ENCODE measurements at regions of chr17 and their contacts with region 1.

Region 1: GRCh38 chr17:75632863-75633485 is at the start of gene SMIM5:
- DNase-seq: peak; percentile 75 to 86 (median 80)
- H3K4me3 ChIP-seq: peak within 1 kb of the TSS in 3 of 7 experiments; percentile 19 to 46 (median 39)
- H3K27ac ChIP-seq: no peak within 1 kb of the TSS
- H3K4me1 ChIP-seq: peaks cover 0 to 44% (median 36%) of the 10 kb centered on the region in 4 experiments
- H3K27me3 ChIP-seq: no peaks in the 10 kb centered on the region

Region 2: GRCh38 chr17:75393523-75394331 is 239.2 kb before region 1 on chr17:
- CTCF ChIA-PET with region 1: no interaction called
- POLR2A ChIA-PET with region 1: no interaction called
- DNase-seq: peak; percentile 96 to 98 (median 98)
- H3K4me3 ChIP-seq: peak overlapping the region; percentile 39 to 87 (median 77)
- H3K27ac ChIP-seq: peak overlapping the region; percentile 55 to 80
- H3K4me1 ChIP-seq: peaks cover 17 to 40% (median 22%) of the 10 kb centered on the region in 4 experiments
- H3K27me3 ChIP-seq: no peaks in the 10 kb centered on the region

Region 3: GRCh38 chr17:75571197-75571873 is 61.6 kb before region 1 on chr17:
- CTCF ChIA-PET with region 1: no interaction called
- POLR2A ChIA-PET with region 1: no interaction called
- DNase-seq: peak; percentile 95 to 98 (median 95)
- H3K4me3 ChIP-seq: no peak overlapping the region
- H3K27ac ChIP-seq: peak overlapping the region; percentile 61 to 91
- H3K4me1 ChIP-seq: peaks cover 0 to 22% (median 20%) of the 10 kb centered on the region in 4 experiments
- H3K27me3 ChIP-seq: no peaks in the 10 kb centered on the region

Region 4: GRCh38 chr17:75619506-75620431 is 13.2 kb before region 1 on chr17:
- CTCF ChIA-PET with region 1: interaction called, 28 read pairs
- POLR2A ChIA-PET with region 1: no interaction called
- DNase-seq: peak in 2 of 3 donors; percentile 35 to 44
- H3K4me3 ChIP-seq: no peak overlapping the region
- H3K27ac ChIP-seq: no peak overlapping the region
- H3K4me1 ChIP-seq: no peaks in the 10 kb centered on the region
- H3K27me3 ChIP-seq: no peaks in the 10 kb centered on the region

Region 5: DNA sequence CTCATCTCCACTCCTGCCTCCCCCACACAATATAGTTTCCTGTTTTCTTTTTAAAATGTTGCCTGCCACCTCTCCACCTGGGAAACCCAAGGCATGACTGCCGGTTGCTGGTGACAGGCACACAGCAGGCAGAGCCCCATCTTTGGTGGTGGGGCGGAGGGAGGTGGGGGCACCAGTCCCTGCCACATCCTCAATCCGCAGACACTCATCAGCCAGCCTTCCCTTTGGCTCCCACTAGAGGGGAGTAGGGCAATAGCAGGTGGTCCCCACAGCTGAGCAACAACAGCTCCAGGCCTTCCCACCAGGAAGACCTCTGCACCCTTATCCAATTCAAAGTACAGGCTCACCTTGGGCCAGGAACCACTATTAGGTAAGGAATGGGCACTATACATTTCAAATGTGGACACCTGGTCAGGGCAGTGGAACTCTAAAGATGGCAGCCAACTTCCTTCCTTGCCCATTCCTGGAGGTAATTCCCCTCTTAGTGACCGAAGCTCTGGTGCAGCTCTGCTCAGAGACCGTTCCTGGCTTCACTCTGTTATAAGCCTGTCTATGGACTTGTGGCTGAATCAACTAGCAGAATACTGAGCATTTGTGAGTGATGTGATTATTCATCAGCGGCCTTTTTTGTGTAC is 20.1 kb after region 1 on chr17:
- CTCF ChIA-PET with region 1: interaction called, 834 read pairs
- POLR2A ChIA-PET with region 1: interaction called, 7 read pairs
- DNase-seq: peak; percentile 71 to 83 (median 83)
- H3K4me3 ChIP-seq: peak overlapping the region in 2 of 7 experiments; percentile 11 to 24
- H3K27ac ChIP-seq: peak overlapping the region in 1 of 2 experiments; percentile 43
- H3K4me1 ChIP-seq: peaks cover 0 to 15% (median 10%) of the 10 kb centered on the region in 4 experiments
- H3K27me3 ChIP-seq: no peaks in the 10 kb centered on the region

Region 6: DNA sequence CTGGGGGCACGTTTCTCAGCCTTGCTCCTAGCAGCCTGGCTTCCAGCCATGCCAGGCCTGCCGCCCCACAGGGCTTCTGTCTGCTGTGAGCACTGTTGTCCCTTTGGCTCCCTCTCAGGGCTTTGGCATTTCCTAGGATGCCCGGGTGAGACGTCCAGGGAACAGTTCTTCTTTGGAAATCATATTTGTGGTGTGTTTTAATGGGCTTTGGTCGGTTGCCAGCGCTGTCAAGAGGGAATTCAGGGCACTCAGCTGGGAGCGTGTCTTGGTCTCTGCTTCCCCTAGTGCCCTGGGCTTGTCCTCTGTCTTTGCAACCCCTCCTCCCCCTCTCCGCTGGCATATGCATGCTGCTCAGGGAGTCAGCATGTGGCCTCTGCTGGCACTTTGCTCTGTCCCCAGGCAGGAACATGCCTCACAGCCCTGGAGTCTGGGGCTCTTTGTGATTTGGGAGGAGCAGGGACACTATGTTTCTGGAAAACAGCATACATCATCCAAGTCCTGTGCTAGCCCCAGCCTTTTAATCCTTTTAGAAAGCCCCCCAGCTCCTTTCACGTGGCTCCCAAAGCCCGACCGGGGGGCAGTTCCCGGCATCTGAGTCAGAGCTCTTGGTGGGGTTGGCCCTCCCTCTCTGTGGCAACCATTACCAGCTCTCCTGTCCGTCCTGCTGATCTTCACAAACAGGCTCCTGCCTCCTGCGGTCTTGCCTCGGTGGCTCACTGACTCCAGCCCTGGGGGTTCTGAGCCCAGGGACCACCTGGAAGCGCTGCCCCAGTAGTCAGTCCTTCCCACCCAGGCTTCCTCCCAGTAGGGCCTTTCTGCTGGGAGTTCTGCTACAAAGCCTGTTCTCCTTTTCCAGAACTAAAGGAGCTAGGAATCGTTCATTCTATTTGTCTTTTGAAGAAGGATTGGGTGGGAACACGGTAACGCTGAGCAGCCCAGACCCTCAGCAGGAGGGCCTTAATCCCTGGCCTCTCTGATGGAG is 60.8 kb after region 1 on chr17:
- CTCF ChIA-PET with region 1: interaction called, 15 read pairs
- POLR2A ChIA-PET with region 1: no interaction called
- DNase-seq: no peak
- H3K4me3 ChIP-seq: no peak overlapping the region
- H3K27ac ChIP-seq: peak overlapping the region in 1 of 2 experiments; percentile 2
- H3K4me1 ChIP-seq: peaks cover 7 to 32% (median 27%) of the 10 kb centered on the region in 4 experiments
- H3K27me3 ChIP-seq: no peaks in the 10 kb centered on the region